ENCODE measurements at regions of chr12 and their contacts with region 1.

Region 1: DNA sequence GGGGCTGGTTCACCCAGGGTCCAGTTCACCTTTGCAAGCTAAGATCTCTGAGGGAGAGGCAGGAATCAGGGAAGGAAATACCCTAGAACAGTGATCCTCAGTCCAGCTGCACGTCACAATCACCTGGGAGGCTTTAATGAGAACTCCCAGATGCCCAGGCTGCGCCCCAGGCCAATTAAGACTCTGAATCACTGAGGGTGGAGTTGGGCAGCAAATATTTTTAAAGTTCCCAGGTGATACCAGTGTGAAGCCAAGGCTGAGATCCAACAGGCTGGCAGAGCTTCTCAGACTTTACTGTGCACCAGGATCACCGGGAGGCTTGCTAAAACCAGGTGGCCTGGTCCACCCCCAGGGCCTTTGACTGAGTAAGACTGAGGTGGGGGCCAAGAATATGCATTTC is 23.8 kb downstream of the MYL2 start:
- DNase-seq: no peak
- H3K4me3 ChIP-seq: no peak overlapping the region
- H3K27ac ChIP-seq: no peak overlapping the region
- H3K4me1 ChIP-seq: peaks cover 0 to 3% (median under 1%) of the 10 kb centered on the region in 4 experiments; a peak in 3 of 7 replicates
- H3K27me3 ChIP-seq: no peaks in the 10 kb centered on the region
- CTCF ChIP-seq: no peak
- EP300 ChIP-seq: no peak
- POLR2A ChIP-seq: no peak
- RAD21 ChIP-seq: no peak

Region 2: DNA sequence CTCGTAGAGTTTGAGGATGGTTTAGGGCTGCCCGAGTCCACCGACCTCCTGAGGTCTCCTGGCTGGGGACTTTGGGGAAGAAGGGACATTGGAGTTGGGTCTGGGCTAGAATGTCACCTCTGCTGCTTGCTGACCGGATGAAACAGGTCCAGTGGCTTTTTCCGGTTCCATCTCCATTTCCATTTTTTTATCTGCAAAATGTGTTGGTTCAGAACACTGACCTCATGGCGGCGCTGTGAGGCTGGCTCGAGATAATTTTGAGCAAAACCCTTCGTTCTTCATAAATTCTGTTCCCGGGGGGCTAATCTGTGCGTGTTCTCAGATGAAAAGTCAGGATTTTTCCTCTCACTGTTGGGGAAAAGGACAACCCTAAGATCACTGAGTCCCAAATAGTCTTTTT is 35.5 kb after region 1 on chr12:
- CTCF ChIA-PET with region 1: interaction called, 25 read pairs
- POLR2A ChIA-PET with region 1: interaction called, 24 read pairs
- DNase-seq: peak in 1 of 2 experiments; percentile 63
- H3K4me3 ChIP-seq: no peak overlapping the region
- H3K27ac ChIP-seq: no peak overlapping the region
- H3K4me1 ChIP-seq: peaks cover 3 to 19% (median 11%) of the 10 kb centered on the region in 4 experiments
- H3K27me3 ChIP-seq: no peaks in the 10 kb centered on the region; a peak in 1 of 7 replicates
- CTCF ChIP-seq: peak; percentile 40 to 68 (median 60)
- EP300 ChIP-seq: no peak
- POLR2A ChIP-seq: no peak
- RAD21 ChIP-seq: peak; percentile 53 to 69

Region 3: DNA sequence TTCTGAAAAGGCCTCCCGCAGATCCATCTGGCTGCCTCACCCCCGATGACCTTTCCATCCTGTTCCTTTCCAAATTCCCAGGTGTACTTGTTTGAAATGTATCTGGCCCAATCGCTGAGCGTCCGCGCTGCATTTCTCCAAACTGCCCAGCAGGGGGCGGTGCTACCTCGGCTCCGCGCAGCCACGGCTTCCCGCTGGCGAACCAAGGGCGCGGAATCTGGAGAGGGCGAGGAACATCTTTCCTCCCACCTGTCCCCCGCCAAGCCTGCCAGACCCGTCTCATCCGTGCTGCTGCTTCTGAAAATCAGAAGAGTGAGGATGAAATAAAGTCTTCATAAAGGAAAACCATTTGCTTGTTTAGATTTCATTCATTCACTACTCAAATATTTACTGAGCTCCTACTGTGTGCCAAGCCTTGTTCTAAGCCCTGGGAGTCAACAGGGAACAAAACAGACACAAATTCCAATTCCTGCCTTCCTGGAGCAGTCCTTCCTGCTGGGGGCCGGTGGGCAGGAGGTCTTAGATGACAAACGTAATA is 40.6 kb after region 1 on chr12:
- CTCF ChIA-PET with region 1: interaction called, 7 read pairs
- POLR2A ChIA-PET with region 1: interaction called, 24 read pairs
- DNase-seq: peak; percentile 89 to 95
- H3K4me3 ChIP-seq: peak overlapping the region; percentile 2 to 57 (median 12); a peak in 5 of 8 replicates
- H3K27ac ChIP-seq: peak overlapping the region; percentile 76; the same call in 1 of the 2 replicates
- H3K4me1 ChIP-seq: peaks cover 1 to 19% (median 10%) of the 10 kb centered on the region in 4 experiments; a peak in 6 of 7 replicates
- H3K27me3 ChIP-seq: peaks cover 0 to 2% (median 0%) of the 10 kb centered on the region in 4 experiments; a peak in 3 of 7 replicates
- CTCF ChIP-seq: peak; percentile 80 to 91 (median 88)
- EP300 ChIP-seq: 0 out of 3 replicates have a peak, but pooled peaks of 1 of the 2 experiments have one; percentile 43
- POLR2A ChIP-seq: no peak
- RAD21 ChIP-seq: peak; percentile 78 to 79

Region 4: GRCh38 chr12:110992555-110993471 is 96.3 kb after region 1 on chr12:
- CTCF ChIA-PET with region 1: no interaction called
- POLR2A ChIA-PET with region 1: no interaction called
- DNase-seq: no peak
- H3K4me3 ChIP-seq: no peak overlapping the region
- H3K27ac ChIP-seq: no peak overlapping the region
- H3K4me1 ChIP-seq: no peaks in the 10 kb centered on the region
- H3K27me3 ChIP-seq: no peaks in the 10 kb centered on the region
- CTCF ChIP-seq: no peak
- EP300 ChIP-seq: no peak
- POLR2A ChIP-seq: no peak
- RAD21 ChIP-seq: no peak

Region 5: DNA sequence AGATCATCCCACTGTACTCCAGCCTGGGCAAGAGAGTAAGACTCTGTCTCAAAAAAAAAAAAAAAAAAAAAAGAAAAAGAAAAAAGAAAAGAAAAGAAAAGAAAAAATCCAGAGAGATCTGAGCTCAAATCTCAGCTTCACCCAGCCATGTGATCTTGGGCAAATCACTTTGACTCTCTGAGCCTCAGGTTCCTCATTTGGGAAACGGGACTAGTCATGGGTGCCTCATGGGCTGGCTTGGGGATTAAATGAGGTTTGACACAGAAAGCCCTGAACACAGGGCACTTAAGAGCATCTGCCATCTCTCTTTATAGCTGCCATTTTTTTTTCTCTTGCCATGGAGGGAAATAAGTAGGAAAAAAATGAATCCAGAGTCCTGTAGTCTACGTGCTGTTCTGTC is 110.1 kb after region 1 on chr12:
- CTCF ChIA-PET with region 1: interaction called, 11 read pairs
- POLR2A ChIA-PET with region 1: no interaction called
- DNase-seq: no peak
- H3K4me3 ChIP-seq: no peak overlapping the region
- H3K27ac ChIP-seq: no peak overlapping the region
- H3K4me1 ChIP-seq: no peaks in the 10 kb centered on the region
- H3K27me3 ChIP-seq: peaks cover 0 to 3% (median 0%) of the 10 kb centered on the region in 4 experiments; a peak in 1 of 7 replicates
- CTCF ChIP-seq: no peak
- EP300 ChIP-seq: no peak
- POLR2A ChIP-seq: no peak
- RAD21 ChIP-seq: no peak

Region 6: DNA sequence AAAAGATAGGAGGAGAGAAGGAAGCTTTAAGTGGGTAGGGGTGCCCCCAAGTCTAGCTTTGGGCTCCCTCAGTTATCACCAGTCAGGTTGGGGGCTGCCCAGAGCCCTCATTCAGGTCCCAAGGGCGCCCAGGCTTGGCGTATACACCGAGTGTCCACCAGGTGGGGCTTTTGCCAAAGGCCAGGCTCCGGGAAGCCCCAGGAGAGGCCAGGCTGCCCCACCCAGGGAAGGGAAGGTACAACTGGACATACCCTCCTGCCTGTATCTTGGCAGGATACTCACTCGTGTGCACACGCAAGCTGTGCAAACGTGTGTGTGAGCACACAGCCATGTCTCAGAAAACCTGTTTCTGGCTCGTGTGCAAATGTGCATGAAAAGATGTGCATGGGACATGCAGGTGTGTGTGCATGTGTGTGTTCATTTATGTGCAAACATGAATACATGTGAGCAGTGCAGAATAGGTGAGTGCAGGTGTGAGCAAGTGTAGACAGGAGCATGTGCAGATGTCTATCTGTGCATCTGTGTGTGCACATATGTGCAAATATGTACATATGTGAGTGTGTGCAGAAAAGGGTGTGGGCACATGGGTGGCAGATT is 127.7 kb after region 1 on chr12:
- CTCF ChIA-PET with region 1: interaction called, 45 read pairs
- POLR2A ChIA-PET with region 1: no interaction called
- DNase-seq: peak in 1 of 2 experiments; percentile 90
- H3K4me3 ChIP-seq: no peak overlapping the region
- H3K27ac ChIP-seq: no peak overlapping the region
- H3K4me1 ChIP-seq: no peaks in the 10 kb centered on the region; a peak in 2 of 7 replicates
- H3K27me3 ChIP-seq: peaks cover 0 to 2% (median 0%) of the 10 kb centered on the region in 4 experiments; a peak in 3 of 7 replicates
- CTCF ChIP-seq: peak; percentile 83 to 97 (median 93)
- EP300 ChIP-seq: no peak
- POLR2A ChIP-seq: no peak
- RAD21 ChIP-seq: peak; percentile 95 to 97

Region 7: GRCh38 chr12:111033281-111034082 is 136.9 kb after region 1 on chr12:
- CTCF ChIA-PET with region 1: interaction called, 10 read pairs
- POLR2A ChIA-PET with region 1: no interaction called
- DNase-seq: peak in 1 of 2 experiments; percentile 84
- H3K4me3 ChIP-seq: peak overlapping the region; percentile 62 to 95 (median 76)
- H3K27ac ChIP-seq: no peak overlapping the region
- H3K4me1 ChIP-seq: peaks cover 7 to 23% (median 15%) of the 10 kb centered on the region in 4 experiments
- H3K27me3 ChIP-seq: peaks cover 0 to 26% (median 16%) of the 10 kb centered on the region in 4 experiments; a peak in 5 of 7 replicates
- CTCF ChIP-seq: peak; percentile 59 to 84 (median 69)
- EP300 ChIP-seq: no peak
- POLR2A ChIP-seq: no peak
- RAD21 ChIP-seq: peak; percentile 44 to 55